Sigmoid colon (tissue), 7 donors: ENCODE measurements at regions of chr12 and their contacts with region 1.

Region 1: DNA sequence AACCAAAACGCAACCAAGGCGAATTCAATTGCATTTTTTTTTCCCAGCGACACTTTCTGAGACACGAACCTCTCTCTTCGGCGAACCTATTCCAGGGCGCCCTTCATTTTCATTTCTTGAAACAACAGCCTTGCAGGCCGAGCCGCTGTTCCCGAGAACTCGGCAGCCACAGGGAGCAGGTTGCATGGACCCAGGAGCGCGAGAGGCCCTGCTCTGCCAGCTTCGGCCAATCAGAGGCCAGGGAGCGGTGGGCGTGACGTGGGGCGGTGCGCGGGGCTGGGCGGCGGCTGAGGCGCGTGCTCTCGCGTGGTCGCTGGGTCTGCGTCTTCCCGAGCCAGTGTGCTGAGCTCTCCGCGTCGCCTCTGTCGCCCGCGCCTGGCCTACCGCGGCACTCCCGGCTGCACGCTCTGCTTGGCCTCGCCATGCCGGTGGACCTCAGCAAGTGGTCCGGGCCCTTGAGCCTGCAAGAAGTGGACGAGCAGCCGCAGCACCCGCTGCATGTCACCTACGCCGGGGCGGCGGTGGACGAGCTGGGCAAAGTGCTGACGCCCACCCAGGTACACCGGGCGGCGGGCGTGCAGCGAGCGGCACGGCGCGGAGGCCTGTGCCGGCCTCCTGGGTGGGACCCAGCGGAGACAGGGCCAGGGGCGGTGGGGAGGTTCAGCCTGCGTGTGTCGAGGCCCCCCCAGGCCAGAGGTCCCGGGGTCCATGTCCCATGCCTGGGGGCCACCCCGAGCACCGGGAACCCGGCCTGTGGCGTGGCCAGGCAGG is at the start of gene PEBP1:
- DNase-seq: peak; percentile 97
- H3K4me3 ChIP-seq: peak within 1 kb of the TSS; percentile 89 to 99 (median 93)
- H3K27ac ChIP-seq: peak within 1 kb of the TSS; percentile 88 to 98 (median 91)
- H3K4me1 ChIP-seq: peaks cover 0 to 23% (median 20%) of the 10 kb centered on the region in 4 donors
- H3K27me3 ChIP-seq: no peaks in the 10 kb centered on the region
- CTCF ChIP-seq: no peak
- EP300 ChIP-seq: no peak
- POLR2A ChIP-seq: peak; percentile 73 to 78
- total RNA-seq, gene PEBP1: 202 to 339 (median 292) TPM

Region 2: DNA sequence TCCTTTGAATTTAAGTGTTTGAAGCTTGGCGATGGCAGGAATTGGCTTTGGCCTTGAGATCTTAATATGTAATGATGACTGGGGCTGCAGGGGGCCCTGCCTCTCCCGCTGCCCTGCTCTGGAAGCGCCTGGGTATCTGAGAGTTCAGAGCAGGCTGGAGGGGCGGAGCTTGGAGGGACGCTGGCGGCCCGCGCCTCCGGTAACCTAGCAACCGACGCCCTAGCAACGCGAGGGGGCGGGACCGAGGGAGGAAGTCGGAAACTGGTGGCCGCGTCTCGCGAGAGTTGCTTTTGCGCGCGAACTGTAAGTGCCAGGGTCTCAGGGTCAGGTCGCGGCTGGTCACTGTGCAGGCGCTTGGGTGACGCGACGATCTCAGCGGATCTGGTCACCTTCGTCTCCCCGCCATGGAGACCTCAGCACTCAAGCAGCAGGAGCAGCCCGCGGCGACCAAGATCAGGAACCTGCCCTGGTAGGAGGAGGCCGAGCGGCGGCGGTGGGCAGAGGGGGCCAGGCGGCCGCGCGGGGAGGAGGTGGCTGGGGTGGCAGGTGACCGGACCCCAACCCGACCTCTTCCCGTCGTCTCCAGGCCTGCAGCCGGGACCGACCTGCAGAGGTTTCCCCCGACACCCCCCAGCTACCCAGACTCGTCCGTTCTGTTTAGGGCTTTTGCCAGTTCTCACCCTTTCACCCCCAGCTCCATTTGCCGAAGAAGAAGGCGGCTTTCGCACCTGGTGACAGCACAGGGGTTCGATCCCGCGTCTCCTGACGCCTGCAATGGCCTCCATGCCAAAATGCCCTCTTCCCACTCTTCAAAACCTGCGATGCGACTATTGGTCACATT is 119.3 kb before region 1 on chr12 and contains the start of gene RFC5:
- intact Hi-C with region 1: loop called (anchors 5 kb)
- DNase-seq: peak; percentile 98
- H3K4me3 ChIP-seq: peak within 1 kb of the TSS; percentile 85 to 95 (median 90)
- H3K27ac ChIP-seq: peak within 1 kb of the TSS; percentile 44 to 72 (median 60)
- H3K4me1 ChIP-seq: peaks cover 0 to 17% (median 14%) of the 10 kb centered on the region in 4 donors
- H3K27me3 ChIP-seq: no peaks in the 10 kb centered on the region
- CTCF ChIP-seq: no peak
- EP300 ChIP-seq: no peak
- POLR2A ChIP-seq: no peak
- total RNA-seq, gene RFC5: 6.9 to 12.7 (median 9.7) TPM

Region 3: GRCh38 chr12:118189741-118190191 is 53.8 kb after region 1 on chr12:
- intact Hi-C with region 1: loop called (anchors 5 kb)
- DNase-seq: peak; percentile 65
- H3K4me3 ChIP-seq: peak overlapping the region; percentile 18 to 50 (median 45)
- H3K27ac ChIP-seq: peak overlapping the region; percentile 79 to 85 (median 82)
- H3K4me1 ChIP-seq: peaks cover 0 to 39% (median 19%) of the 10 kb centered on the region in 4 donors
- H3K27me3 ChIP-seq: no peaks in the 10 kb centered on the region
- CTCF ChIP-seq: no peak
- EP300 ChIP-seq: no peak
- POLR2A ChIP-seq: no peak